MCF 10A (cell line): ENCODE measurements at regions of chr15 and their contacts with region 1.

Region 1: DNA sequence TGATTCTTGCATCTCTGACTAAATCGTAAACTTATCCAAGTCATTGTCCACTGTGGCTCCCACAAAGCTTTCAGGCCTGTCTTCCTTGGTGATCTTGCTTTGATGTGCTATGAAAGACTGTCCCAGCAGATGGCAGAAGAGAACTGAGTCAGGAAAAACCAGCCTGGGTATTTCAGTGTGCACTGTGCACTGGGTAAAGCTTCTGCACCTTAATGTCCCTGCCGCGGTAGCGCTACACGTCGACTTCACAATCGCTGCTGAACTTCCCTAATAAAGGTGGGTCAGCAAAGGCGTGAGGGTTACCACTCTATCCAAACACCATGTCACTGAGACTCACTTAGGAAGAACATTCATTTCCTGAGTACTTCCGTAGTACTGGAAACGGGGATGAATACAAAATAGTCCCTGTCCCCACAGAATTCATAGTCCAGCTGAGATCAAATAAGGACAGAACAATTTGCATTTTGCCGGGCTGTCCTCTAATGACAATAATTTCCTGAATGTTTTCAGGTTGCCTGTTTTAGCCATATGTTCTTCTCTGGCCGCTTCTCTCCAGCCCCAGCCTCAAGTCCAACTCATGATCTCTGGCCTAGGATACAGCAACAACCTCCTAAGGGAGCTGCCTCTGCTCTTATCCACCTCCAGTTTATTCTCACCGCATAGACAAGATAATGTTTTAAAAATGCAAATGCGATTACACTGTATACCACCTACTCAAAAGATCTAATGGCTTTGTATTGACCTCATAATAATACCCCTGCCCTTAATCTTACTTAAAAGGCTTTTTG is 83.6 kb upstream of the AKAP13 start:
- DNase-seq: peak; percentile 83
- H3K4me3 Mint-ChIP-seq: no peak overlapping the region
- H3K27ac Mint-ChIP-seq: no peak overlapping the region
- H3K4me1 Mint-ChIP-seq: peaks cover 11% of the 10 kb centered on the region
- H3K27me3 Mint-ChIP-seq: no peaks in the 10 kb centered on the region
- CTCF ChIP-seq: peak; percentile 65

Region 2: DNA sequence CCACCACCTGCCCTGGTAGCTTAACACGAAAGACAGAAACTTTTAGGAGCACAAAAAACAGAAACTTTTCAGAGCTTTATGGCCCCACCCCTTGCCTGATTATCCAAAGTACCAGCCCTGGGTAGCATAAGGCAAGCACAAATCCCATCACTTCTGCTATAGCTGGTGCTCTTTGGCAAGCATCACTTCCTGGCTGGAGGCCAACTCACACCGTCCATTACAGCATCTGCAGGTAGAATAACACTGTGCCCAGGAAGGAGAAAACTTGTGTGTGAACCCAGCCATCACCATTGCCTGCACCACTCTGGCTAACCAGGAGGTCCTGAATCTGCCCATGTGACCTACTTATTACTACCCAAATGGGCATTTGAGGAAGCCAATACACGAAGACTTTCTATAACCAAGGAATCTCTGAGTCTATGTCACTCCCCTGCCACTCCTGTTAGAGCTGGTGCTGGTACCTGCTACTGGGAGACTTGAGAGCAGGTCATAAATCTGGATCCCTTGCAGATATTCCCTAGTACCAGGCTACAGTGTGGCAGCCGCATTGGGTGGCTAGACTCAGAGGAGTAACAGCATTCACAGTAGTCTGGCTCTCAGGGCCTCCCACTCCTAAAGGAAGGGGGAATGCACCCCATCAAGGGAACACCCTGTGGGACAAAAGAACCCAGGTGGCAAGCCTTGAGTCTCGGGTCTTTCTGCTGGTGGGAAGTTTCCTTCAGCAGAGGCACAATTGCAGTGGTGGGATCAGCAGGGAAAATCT is 10.3 kb after region 1 on chr15:
- CTCF ChIA-PET with region 1: interaction called, 14 read pairs
- POLR2A ChIA-PET with region 1: interaction called, 5 read pairs
- intact Hi-C with region 1: no loop called
- DNase-seq: peak; percentile 39
- H3K4me3 Mint-ChIP-seq: no peak overlapping the region
- H3K27ac Mint-ChIP-seq: no peak overlapping the region
- H3K4me1 Mint-ChIP-seq: no peaks in the 10 kb centered on the region
- H3K27me3 Mint-ChIP-seq: no peaks in the 10 kb centered on the region
- CTCF ChIP-seq: no peak

Region 3: DNA sequence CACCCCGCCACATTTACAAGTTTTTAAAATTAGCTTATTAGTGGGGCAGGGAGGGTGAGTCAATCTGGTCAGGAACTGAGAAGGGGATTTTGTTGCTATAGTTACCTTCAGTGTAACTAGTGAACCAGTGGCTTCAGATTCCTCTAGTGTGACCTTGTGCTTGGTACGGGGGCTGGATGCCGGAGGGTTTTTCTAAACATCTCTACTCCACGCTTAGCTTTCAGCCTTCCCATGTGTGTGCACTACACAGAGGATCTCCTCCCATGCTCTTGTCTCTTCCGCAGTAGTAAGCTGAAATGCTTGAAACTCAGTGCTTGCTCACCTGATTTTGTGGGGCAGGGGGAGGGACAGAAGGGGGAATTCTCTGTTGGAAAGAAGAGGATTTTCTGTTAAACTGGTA is 15.7 kb after region 1 on chr15:
- CTCF ChIA-PET with region 1: interaction called, 14 read pairs
- POLR2A ChIA-PET with region 1: interaction called, 5 read pairs
- intact Hi-C with region 1: no loop called
- DNase-seq: no peak
- H3K4me3 Mint-ChIP-seq: no peak overlapping the region
- H3K27ac Mint-ChIP-seq: no peak overlapping the region
- H3K4me1 Mint-ChIP-seq: peaks cover 13% of the 10 kb centered on the region
- H3K27me3 Mint-ChIP-seq: no peaks in the 10 kb centered on the region
- CTCF ChIP-seq: no peak

Region 4: DNA sequence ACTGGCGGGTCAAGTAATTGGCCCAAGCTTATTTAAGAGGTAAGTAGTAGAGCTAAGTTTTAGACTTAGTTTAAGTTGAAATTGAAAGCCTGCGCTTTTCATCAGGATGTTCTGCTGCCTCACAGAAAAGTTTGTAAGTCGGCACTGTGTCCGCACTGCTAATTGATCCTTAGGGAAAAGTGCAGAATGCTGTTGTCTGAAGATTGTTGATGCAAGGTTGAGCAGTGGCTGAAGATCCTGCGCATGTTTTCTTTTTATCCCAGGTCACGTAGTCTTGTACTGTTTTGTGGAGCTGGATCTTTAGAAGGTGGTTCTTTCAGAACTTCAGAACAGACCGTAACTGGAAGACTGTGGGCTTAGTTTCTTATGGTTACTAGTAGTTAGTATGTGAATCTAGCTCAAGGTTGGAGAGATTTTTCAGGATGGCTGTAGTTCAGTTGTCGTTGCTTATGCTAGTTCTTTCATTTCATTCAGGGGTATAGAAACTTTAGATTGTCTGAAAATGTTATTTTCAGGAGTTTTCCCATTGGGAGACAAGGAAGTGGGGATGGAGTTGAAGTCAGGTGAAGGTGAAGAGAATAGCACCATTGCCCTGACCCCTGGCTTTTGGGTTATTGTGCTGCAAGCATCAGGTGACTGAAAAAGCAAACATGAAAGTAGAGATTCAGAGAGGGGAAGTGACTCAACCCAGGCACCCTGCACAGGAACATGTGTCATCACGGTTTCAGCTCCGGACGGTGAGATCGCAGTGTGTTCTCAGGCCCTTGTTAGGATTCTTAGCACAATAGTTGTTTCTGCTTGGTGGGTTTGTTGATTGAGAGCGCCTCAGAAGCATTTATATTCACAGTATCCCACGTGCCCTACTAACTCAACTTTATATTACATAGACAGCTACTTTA is 116.4 kb after region 1 on chr15:
- CTCF ChIA-PET with region 1: interaction called, 18 read pairs
- POLR2A ChIA-PET with region 1: no interaction called
- intact Hi-C with region 1: loop called (anchors 1 kb)
- DNase-seq: peak; percentile 97
- H3K4me3 Mint-ChIP-seq: peak overlapping the region; percentile 60
- H3K27ac Mint-ChIP-seq: peak overlapping the region; percentile 94
- H3K4me1 Mint-ChIP-seq: peaks cover 57% of the 10 kb centered on the region
- H3K27me3 Mint-ChIP-seq: no peaks in the 10 kb centered on the region
- CTCF ChIP-seq: no peak

Region 5: GRCh38 chr15:85504749-85505676 is 208.2 kb after region 1 on chr15:
- CTCF ChIA-PET with region 1: interaction called, 26 read pairs
- POLR2A ChIA-PET with region 1: interaction called, 3 read pairs
- intact Hi-C with region 1: loop called (anchors 1 kb)
- DNase-seq: peak; percentile 73
- H3K4me3 Mint-ChIP-seq: no peak overlapping the region
- H3K27ac Mint-ChIP-seq: peak overlapping the region; percentile 61
- H3K4me1 Mint-ChIP-seq: peaks cover 26% of the 10 kb centered on the region
- H3K27me3 Mint-ChIP-seq: no peaks in the 10 kb centered on the region
- CTCF ChIP-seq: peak; percentile 45

Region 6: DNA sequence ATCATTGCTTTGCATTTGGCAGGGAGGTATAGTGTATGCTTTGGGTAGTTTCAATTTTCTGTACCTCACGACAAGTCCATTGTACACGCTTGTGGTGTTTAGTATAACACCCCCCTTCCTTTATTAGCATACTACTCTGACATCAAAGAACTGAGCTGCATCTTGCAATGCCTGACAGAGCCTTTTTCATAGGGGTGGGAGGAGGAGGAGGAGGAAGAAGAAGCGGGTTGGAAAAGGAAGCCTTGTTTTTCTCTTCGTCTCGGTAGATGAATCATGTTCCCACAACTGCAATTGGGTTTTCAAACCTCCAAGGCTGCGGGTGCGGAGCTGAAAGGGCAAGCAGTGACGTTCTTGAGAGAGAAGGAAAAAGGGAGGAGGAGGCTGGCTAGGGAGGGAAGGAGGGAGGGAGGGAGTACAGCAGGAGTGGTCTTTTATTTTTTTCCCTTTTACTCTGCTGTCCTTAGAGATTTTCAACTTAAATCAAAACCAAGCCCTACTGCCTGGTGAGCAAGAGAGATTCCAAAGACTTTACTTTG is 322.2 kb after region 1 on chr15:
- CTCF ChIA-PET with region 1: interaction called, 10 read pairs
- POLR2A ChIA-PET with region 1: no interaction called
- intact Hi-C with region 1: no loop called
- DNase-seq: peak; percentile 91
- H3K4me3 Mint-ChIP-seq: no peak overlapping the region
- H3K27ac Mint-ChIP-seq: no peak overlapping the region
- H3K4me1 Mint-ChIP-seq: peaks cover 32% of the 10 kb centered on the region
- H3K27me3 Mint-ChIP-seq: no peaks in the 10 kb centered on the region
- CTCF ChIP-seq: no peak

Region 7: GRCh38 chr15:85667491-85668424 is 370.9 kb after region 1 on chr15:
- CTCF ChIA-PET with region 1: interaction called, 4 read pairs
- POLR2A ChIA-PET with region 1: no interaction called
- intact Hi-C with region 1: loop called (anchors 1 kb)
- DNase-seq: peak; percentile 71
- H3K4me3 Mint-ChIP-seq: no peak overlapping the region
- H3K27ac Mint-ChIP-seq: peak overlapping the region; percentile 87
- H3K4me1 Mint-ChIP-seq: peaks cover 18% of the 10 kb centered on the region
- H3K27me3 Mint-ChIP-seq: no peaks in the 10 kb centered on the region
- CTCF ChIP-seq: no peak